ENCODE measurements at regions of chr1 and their contacts with region 1.

Region 1: DNA sequence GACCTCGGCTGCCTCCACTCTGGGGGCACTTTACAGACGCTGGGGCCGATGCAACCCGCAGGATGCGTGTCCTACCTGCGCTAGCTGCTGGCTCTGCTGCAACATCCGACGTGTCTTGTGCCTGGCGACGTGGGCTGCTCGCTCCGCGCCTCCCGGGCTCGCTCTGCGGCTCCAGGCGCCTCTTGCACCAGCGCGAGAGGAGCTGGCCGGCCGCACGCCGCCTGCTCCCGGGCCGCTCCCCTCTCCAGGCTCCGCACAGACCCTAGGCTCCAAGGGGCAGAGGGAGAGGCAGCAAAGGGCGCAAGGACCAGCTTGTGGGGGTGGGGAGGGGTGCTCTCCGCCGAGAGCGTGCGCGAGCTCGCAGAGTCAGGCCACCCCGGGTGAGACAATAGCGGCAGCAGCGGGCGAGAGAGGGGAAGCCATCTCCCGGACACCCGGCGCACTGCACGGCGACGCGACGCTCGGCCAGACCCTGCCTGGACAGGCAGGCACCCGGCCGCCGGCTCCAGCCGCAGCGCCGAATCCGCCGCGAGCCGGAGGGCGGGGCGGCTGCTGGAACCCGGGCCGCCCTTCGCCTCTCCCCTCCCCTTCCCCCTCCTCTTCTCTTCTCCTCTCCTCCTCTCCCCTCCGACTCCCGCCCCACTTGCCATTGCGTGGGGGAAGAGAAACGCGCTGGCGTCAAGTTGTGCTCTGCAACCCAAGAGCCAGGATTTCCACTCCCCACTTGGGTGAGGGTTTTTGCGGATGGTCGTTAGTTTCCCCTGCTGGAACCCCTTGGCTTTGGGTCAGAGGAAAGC is at the start of gene PIK3C2B:
- DNase-seq: peak; percentile 84
- H3K4me3 ChIP-seq: peak within 1 kb of the TSS; percentile 41 to 93 (median 82)
- H3K27ac ChIP-seq: peak within 1 kb of the TSS; percentile 30
- H3K4me1 ChIP-seq: peaks cover 17% of the 10 kb centered on the region
- H3K27me3 ChIP-seq: no peaks in the 10 kb centered on the region
- CTCF ChIP-seq: peak; percentile 26 to 68
- total RNA-seq, gene PIK3C2B: 7.5 to 14.5 TPM

Region 2: GRCh38 chr1:204411451-204412204 is 82.9 kb before region 1 on chr1 and contains the start of gene PPP1R15B:
- CTCF ChIA-PET with region 1: no interaction called
- dilution Hi-C with region 1: no loop called
- in situ Hi-C with region 1: no loop called
- intact Hi-C with region 1: loop called (anchors 1 kb)
- DNase-seq: peak; percentile 99
- H3K4me3 ChIP-seq: peak within 1 kb of the TSS; percentile 64 to 99 (median 85)
- H3K27ac ChIP-seq: peak within 1 kb of the TSS; percentile 99
- H3K4me1 ChIP-seq: peaks cover 13% of the 10 kb centered on the region
- H3K27me3 ChIP-seq: no peaks in the 10 kb centered on the region
- CTCF ChIP-seq: no peak
- total RNA-seq, gene PPP1R15B: 33.4 to 37.5 TPM

Region 3: DNA sequence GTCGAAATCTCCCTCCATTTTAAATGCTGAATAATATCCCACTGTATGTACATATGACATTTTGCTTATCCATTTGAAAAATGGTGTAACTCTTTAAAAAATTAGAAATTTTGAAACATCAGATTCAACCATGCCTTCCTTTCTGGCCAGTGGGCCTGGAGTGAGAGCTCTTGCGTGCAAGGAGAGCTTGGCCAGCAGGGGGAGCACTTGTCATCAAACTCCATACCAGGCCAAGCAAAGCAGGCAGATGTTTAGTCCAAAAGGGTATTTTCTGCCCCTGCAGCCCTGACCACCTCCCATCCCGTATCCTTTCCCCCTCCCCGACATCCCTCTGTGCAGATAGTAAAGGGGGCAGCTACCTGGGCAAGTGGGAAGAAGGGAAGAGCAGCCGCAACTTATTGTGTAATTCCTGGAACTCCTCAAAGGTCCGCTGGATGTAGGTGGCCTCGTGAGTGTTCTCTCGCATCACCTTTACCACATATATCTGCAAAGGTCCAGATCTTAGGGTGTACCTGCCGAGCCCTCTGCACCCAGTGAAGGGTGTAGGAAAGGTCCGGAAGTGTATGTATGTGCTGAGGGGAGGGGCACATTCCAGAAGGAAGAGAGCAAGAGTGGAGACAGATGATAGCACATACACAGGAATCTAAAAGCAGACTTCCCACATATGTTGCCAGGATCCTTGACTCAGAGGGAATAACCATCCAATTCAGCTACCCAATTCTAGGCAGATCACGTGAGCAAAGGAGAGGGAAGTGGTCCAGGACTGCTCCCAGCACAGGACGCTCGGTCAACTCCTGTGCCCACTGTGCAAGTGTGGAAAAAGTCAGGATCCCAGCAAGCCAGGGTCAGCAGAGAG is 62.9 kb before region 1 on chr1:
- CTCF ChIA-PET with region 1: interaction called, 3 read pairs
- dilution Hi-C with region 1: no loop called
- in situ Hi-C with region 1: no loop called
- intact Hi-C with region 1: loop called (anchors 1 kb)
- DNase-seq: peak; percentile 56
- H3K4me3 ChIP-seq: no peak overlapping the region
- H3K27ac ChIP-seq: no peak overlapping the region
- H3K4me1 ChIP-seq: peaks cover 23% of the 10 kb centered on the region
- H3K27me3 ChIP-seq: no peaks in the 10 kb centered on the region
- CTCF ChIP-seq: peak; percentile 91 to 96

Region 4: DNA sequence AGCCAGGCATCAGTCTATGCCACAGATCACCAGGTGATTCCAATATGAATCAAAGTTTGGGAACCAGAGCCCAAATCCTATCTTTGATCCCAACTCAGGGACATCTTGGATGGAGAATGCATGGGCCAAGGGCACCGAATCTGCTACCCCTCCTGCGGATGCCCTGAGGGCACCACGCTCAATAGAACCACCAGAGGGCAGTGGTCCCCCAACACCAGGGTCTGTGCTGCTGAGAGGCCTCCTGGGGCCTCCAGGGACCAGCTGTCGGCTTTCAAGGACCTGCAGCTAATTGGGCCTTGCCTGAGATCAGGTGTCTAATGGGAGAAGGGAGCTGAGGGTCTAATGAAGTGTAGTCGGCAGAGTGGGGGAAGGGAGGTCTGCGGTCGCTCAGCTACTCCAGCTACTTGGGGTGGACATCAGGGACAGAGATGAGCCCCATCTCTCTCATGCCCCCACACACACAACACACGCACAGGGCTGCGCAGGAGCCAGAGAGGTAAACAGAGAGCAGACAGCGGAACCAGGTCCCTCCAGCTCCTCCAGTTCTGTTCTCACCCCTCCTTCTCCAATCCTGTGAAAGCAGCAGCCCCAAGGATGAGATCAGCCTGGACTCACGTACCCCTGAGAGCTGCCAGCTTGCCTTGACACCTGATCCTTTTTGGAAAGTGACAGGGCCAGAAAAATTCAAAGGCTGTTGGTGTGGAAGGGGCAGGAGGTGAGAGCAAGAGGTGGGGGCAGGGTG is 47.9 kb before region 1 on chr1:
- CTCF ChIA-PET with region 1: interaction called, 4 read pairs
- dilution Hi-C with region 1: no loop called
- in situ Hi-C with region 1: no loop called
- intact Hi-C with region 1: loop called (anchors 1 kb)
- DNase-seq: no peak
- H3K4me3 ChIP-seq: no peak overlapping the region
- H3K27ac ChIP-seq: no peak overlapping the region
- H3K4me1 ChIP-seq: peaks cover 32% of the 10 kb centered on the region
- H3K27me3 ChIP-seq: no peaks in the 10 kb centered on the region
- CTCF ChIP-seq: peak; percentile 39 to 57